RWPE1 (cell line): ENCODE measurements at regions of chr14 and their contacts with region 1.

Region 1: GRCh38 chr14:71320734-71321573 is 413.7 kb downstream of the PCNX1 start:
- DNase-seq: peak; percentile 61
- H3K27ac ChIP-seq: peak overlapping the region; percentile 91
- CTCF ChIP-seq: no peak

Region 2: GRCh38 chr14:71403656-71404055 is 82.7 kb after region 1 on chr14:
- CTCF ChIA-PET with region 1: interaction called, 18 read pairs
- POLR2A ChIA-PET with region 1: no interaction called
- DNase-seq: peak; percentile 6
- H3K27ac ChIP-seq: no peak overlapping the region
- CTCF ChIP-seq: no peak